ENCODE measurements at regions of chr2 and their contacts with region 1.

Region 1: GRCh38 chr2:133171393-133172004 is 396.8 kb downstream of the NCKAP5 start:
- DNase-seq: no peak

Region 2: GRCh38 chr2:132676999-132677398 is 494.5 kb before region 1 on chr2:
- intact Hi-C with region 1: loop called (anchors 5 kb)
- DNase-seq: no peak

Region 3: DNA sequence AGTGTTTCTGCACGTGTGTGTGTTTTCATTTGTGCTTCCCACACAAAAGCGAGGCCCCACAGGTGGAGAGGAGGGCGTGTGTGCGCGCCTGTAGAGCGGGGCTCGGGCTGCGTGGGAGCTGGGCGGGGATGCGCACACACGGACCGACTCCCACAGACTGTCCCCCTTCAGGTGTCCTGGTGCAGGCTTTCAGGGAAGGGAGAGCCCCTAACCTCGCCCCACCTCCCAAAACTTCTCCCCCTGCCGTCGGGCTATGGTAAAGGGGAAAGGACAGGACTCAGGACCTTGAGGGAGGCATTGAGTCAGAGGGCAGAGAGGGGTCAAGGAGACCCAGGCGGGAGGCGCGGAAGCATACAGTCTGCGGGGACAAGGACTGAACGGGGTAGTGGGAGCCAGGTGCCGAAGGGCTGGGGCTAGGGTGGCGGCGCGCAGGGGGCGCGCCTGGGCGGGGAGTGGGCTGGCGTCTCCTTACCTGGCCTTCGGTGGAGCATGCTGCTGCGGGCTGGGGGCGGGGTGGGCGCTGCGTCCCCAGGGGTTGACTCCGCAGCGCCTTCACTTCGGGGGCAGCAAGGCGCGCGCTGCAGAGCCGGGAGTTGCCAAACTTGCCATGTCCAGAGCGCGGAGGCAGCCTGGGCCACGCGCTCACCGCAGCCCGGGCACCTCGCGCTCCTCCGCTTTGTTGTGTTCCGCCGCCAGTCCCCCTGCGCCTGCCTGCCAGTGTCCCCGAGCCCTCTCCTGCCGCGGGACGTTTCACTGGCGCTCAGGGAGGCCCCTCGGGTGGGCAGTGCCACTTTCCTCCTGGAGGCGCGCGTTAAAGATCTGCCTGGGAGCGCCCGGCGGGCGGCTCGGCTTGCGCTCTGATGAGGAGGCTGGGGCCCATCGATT is 94.8 kb after region 1 on chr2:
- intact Hi-C with region 1: no loop called
- DNase-seq: peak in 3 of 10 donors; percentile 72 to 84 (median 83)